A549 (cell line): ENCODE measurements at regions of chr16 and their contacts with region 1.

Region 1: GRCh38 chr16:4350787-4351659 is at the start of gene PAM16:
- DNase-seq: peak; percentile 85 to 95
- ATAC-seq: peak; percentile 85 to 94
- H3K4me3 ChIP-seq: peak within 1 kb of the TSS; percentile 90
- H3K27ac ChIP-seq: peak within 1 kb of the TSS; percentile 94 to 99
- H3K4me1 ChIP-seq: peaks cover 21% of the 10 kb centered on the region
- CTCF ChIP-seq: peak; percentile 28; the same call in 2 of the 3 replicates
- EP300 ChIP-seq: no peak
- POLR2A ChIP-seq: peak; percentile 55
- RAD21 ChIP-seq: no peak
- polyA plus RNA-seq, gene PAM16: 42.5 and 55.1 TPM in 2 replicates

Region 2: GRCh38 chr16:4307215-4308037 is 43.6 kb before region 1 on chr16:
- CTCF ChIA-PET with region 1: interaction called, 12 read pairs
- POLR2A ChIA-PET with region 1: no interaction called
- DNase-seq: peak; percentile 87 to 96
- ATAC-seq: peak; percentile 86 to 87
- H3K4me3 ChIP-seq: peak overlapping the region; percentile 88
- H3K27ac ChIP-seq: peak overlapping the region; percentile 90 to 93
- H3K4me1 ChIP-seq: peaks cover 35% of the 10 kb centered on the region
- CTCF ChIP-seq: no peak
- EP300 ChIP-seq: peak in 1 of 2 experiments; percentile 61; a peak in 1 of 5 replicates
- POLR2A ChIP-seq: peak; percentile 53
- RAD21 ChIP-seq: no peak; a peak in 1 of 5 replicates

Region 3: DNA sequence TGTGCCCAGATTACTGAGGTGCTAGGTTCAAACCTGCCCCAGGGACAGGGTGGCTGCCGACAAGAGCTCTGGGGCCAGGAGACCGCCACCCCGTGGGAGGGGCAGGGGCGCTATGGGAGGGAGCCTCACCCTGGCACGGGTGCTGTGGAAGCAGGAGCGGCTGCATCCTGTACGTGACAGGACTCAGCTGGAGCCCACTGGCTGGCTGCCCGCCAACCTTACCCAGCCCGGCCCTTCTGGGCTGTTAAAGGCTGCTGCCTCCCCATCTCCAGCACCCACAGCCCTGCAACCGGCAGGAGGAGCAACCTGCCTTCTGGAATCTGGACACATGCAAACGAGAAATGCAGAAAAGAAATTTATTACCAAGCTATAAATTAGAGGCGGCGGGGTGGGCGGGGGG is 11.1 kb before region 1 on chr16:
- CTCF ChIA-PET with region 1: interaction called, 10 read pairs
- POLR2A ChIA-PET with region 1: interaction called, 4 read pairs
- DNase-seq: no peak
- ATAC-seq: peak in 1 of 2 experiments; percentile 11; a peak in 3 of 6 replicates
- H3K4me3 ChIP-seq: no peak overlapping the region
- H3K27ac ChIP-seq: no peak overlapping the region
- H3K4me1 ChIP-seq: peaks cover 19% of the 10 kb centered on the region; the same call in 2 of the 3 replicates
- CTCF ChIP-seq: no peak
- EP300 ChIP-seq: no peak
- POLR2A ChIP-seq: no peak
- RAD21 ChIP-seq: no peak

Region 4: DNA sequence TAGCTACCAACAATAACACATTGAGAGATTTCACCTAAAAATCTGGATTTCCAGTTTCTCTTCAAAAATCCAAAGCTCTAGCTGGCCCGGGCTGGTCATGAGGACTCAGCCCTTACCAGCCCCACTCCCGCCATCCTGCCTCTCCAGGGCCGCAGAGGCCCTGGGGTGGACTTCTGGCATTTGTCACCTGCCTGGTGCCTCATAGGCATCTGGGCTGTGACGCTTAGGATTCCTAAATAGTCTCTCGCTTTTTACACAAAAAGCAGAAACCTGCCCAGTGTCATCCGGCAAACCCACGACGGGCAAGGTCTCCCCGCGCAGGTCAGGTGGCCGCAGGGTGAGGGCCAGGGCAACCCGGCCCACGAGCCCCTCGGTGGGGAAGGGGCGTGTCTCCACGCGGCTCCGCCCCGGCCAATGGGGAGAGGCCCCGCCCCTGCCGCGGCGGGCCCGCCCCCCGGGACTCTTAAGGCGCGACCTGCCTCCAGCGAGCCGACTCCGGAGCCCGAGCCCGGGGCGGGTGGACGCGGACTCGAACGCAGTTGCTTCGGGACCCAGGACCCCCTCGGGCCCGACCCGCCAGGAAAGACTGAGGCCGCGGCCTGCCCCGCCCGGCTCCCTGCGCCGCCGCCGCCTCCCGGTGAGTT is 20.5 kb after region 1 on chr16 and contains the start of gene VASN:
- CTCF ChIA-PET with region 1: interaction called, 16 read pairs
- POLR2A ChIA-PET with region 1: no interaction called
- DNase-seq: peak; percentile 68 to 78
- ATAC-seq: peak; percentile 49 to 64
- H3K4me3 ChIP-seq: peak within 1 kb of the TSS; percentile 70
- H3K27ac ChIP-seq: peak within 1 kb of the TSS; percentile 74 to 94
- H3K4me1 ChIP-seq: peaks cover 61% of the 10 kb centered on the region
- CTCF ChIP-seq: no peak
- EP300 ChIP-seq: no peak
- POLR2A ChIP-seq: peak; percentile 98
- RAD21 ChIP-seq: no peak
- polyA plus RNA-seq, gene VASN: 2.0 and 2.3 TPM in 2 replicates